Activated CD4-positive, alpha-beta memory T cell treated with anti-CD3 and anti-CD28 coated beads for 36 hours (primary cell): ENCODE measurements at regions of chr12 and their contacts with region 1.

Region 1: GRCh38 chr12:120116792-120117651 is 469 bp upstream of the RAB35 start:
- DNase-seq: peak; percentile 98
- H3K4me3 Mint-ChIP-seq: peak overlapping the region; percentile 88
- H3K27ac Mint-ChIP-seq: peak overlapping the region; percentile 89
- H3K4me1 Mint-ChIP-seq: peaks cover 67% of the 10 kb centered on the region
- H3K27me3 Mint-ChIP-seq: no peaks in the 10 kb centered on the region

Region 2: GRCh38 chr12:119704065-119704747 is 412.8 kb before region 1 on chr12:
- CTCF ChIA-PET with region 1: no interaction called
- POLR2A ChIA-PET with region 1: no interaction called
- intact Hi-C with region 1: no loop called
- DNase-seq: no peak
- H3K4me3 Mint-ChIP-seq: no peak overlapping the region
- H3K27ac Mint-ChIP-seq: no peak overlapping the region
- H3K4me1 Mint-ChIP-seq: no peaks in the 10 kb centered on the region
- H3K27me3 Mint-ChIP-seq: no peaks in the 10 kb centered on the region

Region 3: DNA sequence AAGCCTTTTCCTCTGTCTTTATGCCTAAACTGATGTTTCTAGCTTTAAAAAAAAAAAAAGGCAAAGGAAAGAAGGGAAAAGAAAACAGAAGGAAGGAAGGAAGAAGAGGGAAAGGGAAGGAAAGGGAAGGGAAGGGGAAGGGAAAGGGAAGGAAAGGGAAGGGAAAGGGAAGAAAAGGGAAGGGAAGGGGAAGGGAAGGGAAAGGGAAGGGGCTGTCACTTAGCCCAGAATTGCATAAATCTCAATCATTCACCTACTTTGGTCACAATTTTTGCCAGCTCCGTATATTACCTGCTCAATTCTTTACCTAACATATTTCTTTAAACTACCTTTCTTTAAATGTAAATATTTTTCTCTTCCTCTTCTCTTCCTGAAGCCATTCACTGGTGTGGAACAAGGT is 266.7 kb before region 1 on chr12:
- CTCF ChIA-PET with region 1: no interaction called
- POLR2A ChIA-PET with region 1: no interaction called
- intact Hi-C with region 1: no loop called
- DNase-seq: no peak
- H3K4me3 Mint-ChIP-seq: no peak overlapping the region
- H3K27ac Mint-ChIP-seq: no peak overlapping the region
- H3K4me1 Mint-ChIP-seq: no peaks in the 10 kb centered on the region
- H3K27me3 Mint-ChIP-seq: no peaks in the 10 kb centered on the region

Region 4: GRCh38 chr12:119988782-119989668 is 128.0 kb before region 1 on chr12 and contains the start of gene BICDL1:
- CTCF ChIA-PET with region 1: interaction called, 7 read pairs
- POLR2A ChIA-PET with region 1: interaction called, 19 read pairs
- intact Hi-C with region 1: loop called (anchors 1 kb)
- DNase-seq: peak; percentile 99
- H3K4me3 Mint-ChIP-seq: peak within 1 kb of the TSS; percentile 88
- H3K27ac Mint-ChIP-seq: peak within 1 kb of the TSS; percentile 91
- H3K4me1 Mint-ChIP-seq: peaks cover 43% of the 10 kb centered on the region
- H3K27me3 Mint-ChIP-seq: no peaks in the 10 kb centered on the region
- total RNA-seq, gene BICDL1: 143 to 155 TPM

Region 5: GRCh38 chr12:120086801-120087621 is 30.0 kb before region 1 on chr12:
- CTCF ChIA-PET with region 1: interaction called, 18 read pairs
- POLR2A ChIA-PET with region 1: interaction called, 12 read pairs
- intact Hi-C with region 1: loop called (anchors 1 kb)
- DNase-seq: peak; percentile 100
- H3K4me3 Mint-ChIP-seq: peak overlapping the region; percentile 64
- H3K27ac Mint-ChIP-seq: peak overlapping the region; percentile 87
- H3K4me1 Mint-ChIP-seq: peaks cover 38% of the 10 kb centered on the region
- H3K27me3 Mint-ChIP-seq: no peaks in the 10 kb centered on the region

Region 6: DNA sequence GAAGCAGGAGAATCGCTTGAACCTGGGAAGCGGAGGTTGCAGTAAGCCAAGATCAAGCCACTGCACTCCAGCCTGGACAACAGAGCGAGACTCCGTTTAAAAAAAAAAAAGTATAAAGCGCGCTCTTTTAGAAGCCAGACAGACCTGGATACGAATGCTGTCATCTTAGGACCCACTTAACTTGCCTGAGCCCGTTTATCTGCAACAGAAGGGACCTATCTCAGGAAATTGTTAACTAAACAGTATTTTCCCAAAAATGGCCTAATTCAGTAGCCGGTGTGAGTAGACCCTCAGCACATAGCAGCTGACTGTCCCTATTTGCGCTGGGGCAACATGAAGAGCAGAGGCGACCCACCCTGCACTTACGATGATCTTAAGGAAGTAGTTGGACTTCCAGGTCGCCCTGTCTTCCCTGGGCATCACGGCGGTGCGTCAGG is 83.4 kb after region 1 on chr12:
- CTCF ChIA-PET with region 1: interaction called, 16 read pairs
- POLR2A ChIA-PET with region 1: interaction called, 131 read pairs
- intact Hi-C with region 1: loop called (anchors 1 kb)
- DNase-seq: no peak
- H3K4me3 Mint-ChIP-seq: peak overlapping the region; percentile 96
- H3K27ac Mint-ChIP-seq: peak overlapping the region; percentile 99
- H3K4me1 Mint-ChIP-seq: peaks cover 41% of the 10 kb centered on the region
- H3K27me3 Mint-ChIP-seq: no peaks in the 10 kb centered on the region

Region 7: DNA sequence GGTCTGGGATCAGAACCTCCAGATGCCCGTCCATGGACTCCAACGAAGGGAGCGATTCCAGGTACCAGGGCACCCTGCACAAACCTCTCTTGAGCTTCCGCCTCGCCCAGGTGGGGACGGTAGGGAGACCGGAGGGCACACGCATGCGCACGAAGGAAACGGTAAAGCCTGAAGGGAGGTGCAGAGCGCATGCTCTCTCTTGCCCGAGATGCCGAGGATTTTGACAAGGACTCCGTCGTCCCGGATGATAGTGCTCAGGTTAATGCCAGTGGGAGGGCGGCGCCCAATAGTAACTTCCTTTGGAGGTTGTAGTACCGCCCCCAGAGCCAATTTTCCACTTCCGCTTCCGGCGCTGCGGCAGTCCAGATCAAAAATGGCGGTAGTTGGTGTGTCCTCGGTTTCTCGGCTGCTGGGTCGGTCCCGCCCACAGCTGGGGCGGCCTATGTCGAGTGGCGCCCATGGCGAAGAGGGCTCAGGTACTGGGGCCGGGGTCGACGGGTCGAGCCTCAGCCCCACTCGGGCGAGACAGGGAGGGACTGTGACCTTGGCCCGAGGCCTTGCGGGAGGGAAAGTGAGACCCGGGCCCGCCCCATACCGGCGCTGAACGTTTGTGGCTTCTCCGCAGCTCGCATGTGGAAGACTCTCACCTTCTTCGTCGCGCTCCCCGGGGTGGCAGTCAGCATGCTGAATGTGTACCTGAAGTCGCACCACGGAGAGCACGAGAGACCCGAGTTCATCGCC is 320.9 kb after region 1 on chr12 and contains the start of gene COX6A1:
- CTCF ChIA-PET with region 1: no interaction called
- POLR2A ChIA-PET with region 1: no interaction called
- intact Hi-C with region 1: loop called (anchors 1 kb)
- DNase-seq: peak; percentile 99
- H3K4me3 Mint-ChIP-seq: peak within 1 kb of the TSS; percentile 99
- H3K27ac Mint-ChIP-seq: peak within 1 kb of the TSS; percentile 92
- H3K4me1 Mint-ChIP-seq: peaks cover 22% of the 10 kb centered on the region
- H3K27me3 Mint-ChIP-seq: peaks cover 2% of the 10 kb centered on the region
- total RNA-seq, gene COX6A1: 474 to 478 TPM